IMR-90 (cell line): ENCODE measurements at regions of chr14 and their contacts with region 1.

Region 1: GRCh38 chr14:74824997-74825396 is 50.9 kb downstream of the PROX2 start:
- DNase-seq: peak; percentile 79
- ATAC-seq: peak; percentile 63
- H3K4me3 ChIP-seq: no peak overlapping the region
- H3K27ac ChIP-seq: no peak overlapping the region
- H3K4me1 ChIP-seq: peaks cover 2% of the 10 kb centered on the region
- H3K27me3 ChIP-seq: no peaks in the 10 kb centered on the region
- CTCF ChIP-seq: no peak
- POLR2A ChIP-seq: no peak
- RAD21 ChIP-seq: no peak

Region 2: GRCh38 chr14:74784634-74785033 is 40.4 kb before region 1 on chr14:
- CTCF ChIA-PET with region 1: interaction called, 3 read pairs
- POLR2A ChIA-PET with region 1: no interaction called
- dilution Hi-C with region 1: no loop called
- in situ Hi-C with region 1: no loop called
- intact Hi-C with region 1: loop called (anchors 5 kb)
- DNase-seq: no peak
- ATAC-seq: no peak
- H3K4me3 ChIP-seq: no peak overlapping the region
- H3K27ac ChIP-seq: no peak overlapping the region
- H3K4me1 ChIP-seq: no peaks in the 10 kb centered on the region
- H3K27me3 ChIP-seq: no peaks in the 10 kb centered on the region
- CTCF ChIP-seq: no peak
- POLR2A ChIP-seq: no peak
- RAD21 ChIP-seq: no peak